ENCODE measurements at regions of chr19 and their contacts with region 1.

Region 1: DNA sequence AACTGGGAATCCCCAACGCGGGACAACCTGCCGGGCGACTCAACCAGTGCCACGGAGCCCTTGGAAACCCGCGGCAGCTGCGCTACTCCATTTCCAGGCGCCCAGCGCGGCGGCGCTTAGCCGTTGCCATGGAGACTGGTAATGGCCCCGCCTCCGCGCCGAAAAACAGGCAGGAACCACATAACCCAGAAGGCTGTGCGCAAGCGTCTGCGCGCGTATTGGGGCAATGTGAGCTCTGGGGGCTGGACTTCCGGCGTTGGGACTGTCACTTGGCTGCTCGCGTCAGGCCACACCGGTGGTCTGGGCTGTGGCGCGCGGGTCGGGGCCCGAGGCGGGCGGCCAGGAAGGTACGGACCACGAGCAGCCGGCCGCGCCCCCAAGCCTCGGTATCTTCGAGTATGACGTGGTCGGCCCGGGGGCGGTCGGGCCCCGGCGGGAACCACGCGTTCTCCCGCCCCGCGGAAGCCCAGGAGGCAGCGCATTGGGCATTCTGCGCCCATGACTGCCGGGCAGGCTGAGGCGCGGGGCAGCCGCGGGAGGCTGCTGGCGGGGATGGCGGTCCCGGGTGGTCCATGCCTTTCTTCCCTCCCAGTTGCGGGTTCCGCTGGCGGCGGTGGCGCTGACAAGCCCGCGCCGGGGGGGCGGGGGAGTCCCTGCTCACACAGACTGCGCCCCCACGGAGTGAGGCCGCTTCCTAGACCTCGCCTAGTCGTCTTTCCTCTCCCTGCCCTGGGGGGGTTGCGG is at the start of gene ZNF324B:
- DNase-seq: peak; percentile 94
- ATAC-seq: peak; percentile 98
- H3K4me3 Mint-ChIP-seq: peak within 1 kb of the TSS; percentile 86
- H3K27ac Mint-ChIP-seq: peak within 1 kb of the TSS; percentile 79
- H3K4me1 Mint-ChIP-seq: peaks cover 16% of the 10 kb centered on the region
- H3K27me3 Mint-ChIP-seq: peaks cover 15% of the 10 kb centered on the region
- CTCF ChIP-seq: no peak
- total RNA-seq, gene ZNF324B: 11.1 and 11.7 TPM in 2 replicates

Region 2: DNA sequence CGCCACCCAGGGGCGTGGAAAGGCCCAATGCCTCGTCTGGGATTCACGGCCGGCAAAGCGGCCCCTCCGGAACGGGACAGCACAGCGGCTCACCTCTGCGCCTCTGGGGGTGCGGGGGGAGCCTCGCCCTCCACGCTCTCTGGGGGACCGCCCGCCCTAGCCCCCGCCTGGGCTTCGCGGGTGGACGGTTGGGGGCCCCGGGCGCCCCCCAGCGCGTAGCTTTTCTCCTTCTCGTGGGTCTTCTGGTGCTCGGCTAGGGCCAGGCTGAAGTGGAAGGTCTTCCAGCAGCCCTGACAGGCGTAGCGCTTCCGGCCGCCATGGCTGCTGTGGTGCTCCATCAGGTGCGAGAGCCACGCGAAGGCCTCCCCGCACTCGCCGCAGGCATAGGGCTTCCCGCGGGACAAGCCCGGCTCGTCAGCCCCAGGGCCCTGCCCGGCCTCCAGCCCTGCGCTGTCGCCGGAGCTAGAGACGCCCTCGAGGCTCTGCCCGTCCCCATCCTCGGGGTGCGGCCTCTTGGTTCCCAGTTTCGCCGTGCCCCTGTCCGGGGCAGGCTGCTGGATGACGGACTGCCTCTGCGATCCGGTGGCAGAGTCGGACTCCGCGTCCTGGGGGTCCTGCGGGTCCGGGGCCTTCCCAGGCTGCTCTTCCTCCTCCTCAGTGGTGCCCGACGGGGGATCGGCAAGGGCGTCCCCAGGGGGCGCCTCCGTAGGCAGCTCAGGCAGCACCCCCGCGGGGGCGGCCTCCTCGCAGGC is 366.8 kb before region 1 on chr19:
- CTCF ChIA-PET with region 1: no interaction called
- POLR2A ChIA-PET with region 1: no interaction called
- intact Hi-C with region 1: no loop called
- DNase-seq: no peak
- ATAC-seq: no peak
- H3K4me3 Mint-ChIP-seq: no peak overlapping the region
- H3K27ac Mint-ChIP-seq: no peak overlapping the region
- H3K4me1 Mint-ChIP-seq: no peaks in the 10 kb centered on the region
- H3K27me3 Mint-ChIP-seq: no peaks in the 10 kb centered on the region
- CTCF ChIP-seq: no peak

Region 3: DNA sequence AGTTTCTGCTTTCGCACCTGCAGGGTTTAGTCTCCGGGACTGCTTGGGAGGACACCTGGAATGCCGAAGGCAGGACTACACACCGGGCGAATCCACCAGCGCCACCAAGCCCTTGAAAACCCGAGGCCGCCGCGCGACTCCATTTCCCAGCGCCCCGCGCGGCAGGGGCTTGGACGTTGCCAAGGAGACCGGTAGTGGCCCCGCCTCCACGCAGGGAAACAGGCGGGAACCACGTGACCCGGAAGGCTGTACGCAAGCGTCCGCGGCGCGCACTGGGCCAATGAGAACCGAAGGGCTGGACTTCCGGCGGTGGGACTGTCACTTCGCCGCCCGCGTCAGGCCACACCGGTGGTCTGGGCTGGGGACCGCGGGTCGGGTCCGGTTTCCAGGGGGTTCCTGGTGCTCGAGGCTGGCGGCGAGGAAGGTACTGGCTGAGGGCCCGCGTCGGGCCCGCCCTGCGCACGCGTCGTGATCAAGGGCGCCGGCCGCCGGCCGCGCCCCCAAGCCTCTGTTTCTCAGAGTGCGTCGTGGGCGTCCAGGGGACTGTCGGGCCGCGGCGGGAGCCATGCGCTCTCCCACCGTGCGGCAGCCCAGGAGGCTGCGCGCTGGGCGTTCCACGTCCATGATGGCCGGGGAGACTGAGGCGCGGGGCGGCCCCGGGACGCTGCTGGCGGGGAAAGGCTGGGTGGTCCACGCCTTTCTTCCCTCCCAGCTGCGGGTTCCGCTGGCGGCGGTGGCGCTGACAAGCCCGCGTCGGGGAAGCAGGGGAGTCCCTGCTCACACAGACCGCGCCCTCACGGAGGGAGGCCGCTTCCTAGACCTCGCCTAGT is 15.4 kb after region 1 on chr19 and contains the start of gene ZNF324:
- CTCF ChIA-PET with region 1: no interaction called
- POLR2A ChIA-PET with region 1: interaction called, 7 read pairs
- intact Hi-C with region 1: loop called (anchors 1 kb)
- DNase-seq: peak; percentile 95
- ATAC-seq: peak; percentile 92
- H3K4me3 Mint-ChIP-seq: peak within 1 kb of the TSS; percentile 81
- H3K27ac Mint-ChIP-seq: peak within 1 kb of the TSS; percentile 56
- H3K4me1 Mint-ChIP-seq: peaks cover 26% of the 10 kb centered on the region
- H3K27me3 Mint-ChIP-seq: no peaks in the 10 kb centered on the region
- CTCF ChIP-seq: no peak
- total RNA-seq, gene ZNF324: 11.8 and 13.1 TPM in 2 replicates

Region 4: DNA sequence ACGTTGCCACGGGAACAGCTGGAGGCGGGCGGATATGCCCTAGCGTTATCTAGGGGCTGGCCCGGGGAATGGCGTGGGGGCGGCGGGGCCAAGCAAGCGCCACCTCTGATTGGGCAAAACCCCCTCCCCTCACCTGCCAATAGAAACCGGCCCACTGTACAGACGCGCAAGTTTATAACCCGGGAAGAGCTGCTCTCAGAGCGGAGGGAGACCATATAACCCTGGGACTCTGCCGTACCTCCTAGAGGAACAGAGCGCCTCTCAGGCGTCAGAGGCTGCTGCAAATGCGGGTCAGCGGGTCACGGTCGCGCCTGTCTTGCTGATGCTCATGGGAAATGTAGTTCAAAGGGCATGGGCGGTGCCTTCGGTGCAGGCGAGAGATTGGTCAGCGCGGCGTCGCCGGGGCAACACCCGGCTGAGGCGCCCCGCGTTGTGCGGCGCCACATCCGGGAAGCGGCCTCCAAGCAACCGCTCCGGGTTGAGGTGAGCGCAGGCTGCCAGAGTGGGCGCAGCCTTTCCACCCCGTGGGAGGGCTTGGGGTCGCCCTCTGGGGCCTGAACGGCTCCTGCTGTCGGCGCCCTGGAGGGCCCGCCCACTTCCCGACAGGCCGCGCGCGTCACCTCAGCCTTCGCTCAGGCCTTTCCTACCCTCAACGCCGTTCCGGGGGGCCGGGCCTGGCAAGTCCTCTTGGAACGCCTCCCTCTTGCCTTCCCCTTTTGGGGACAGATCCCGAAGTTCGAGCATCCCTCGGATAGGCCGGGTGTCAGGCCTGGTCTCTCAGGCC is 24.4 kb after region 1 on chr19 and contains the start of gene ZNF446:
- CTCF ChIA-PET with region 1: no interaction called
- POLR2A ChIA-PET with region 1: no interaction called
- intact Hi-C with region 1: loop called (anchors 1 kb)
- DNase-seq: peak; percentile 91
- ATAC-seq: peak; percentile 88
- H3K4me3 Mint-ChIP-seq: peak within 1 kb of the TSS; percentile 94
- H3K27ac Mint-ChIP-seq: peak within 1 kb of the TSS; percentile 95
- H3K4me1 Mint-ChIP-seq: peaks cover 20% of the 10 kb centered on the region
- H3K27me3 Mint-ChIP-seq: no peaks in the 10 kb centered on the region
- CTCF ChIP-seq: no peak
- total RNA-seq, gene ZNF446: 9.6 and 10.4 TPM in 2 replicates